Posterior vena cava (tissue), 2 donors: ENCODE measurements at regions of chrX and their contacts with region 1.

Region 1: DNA sequence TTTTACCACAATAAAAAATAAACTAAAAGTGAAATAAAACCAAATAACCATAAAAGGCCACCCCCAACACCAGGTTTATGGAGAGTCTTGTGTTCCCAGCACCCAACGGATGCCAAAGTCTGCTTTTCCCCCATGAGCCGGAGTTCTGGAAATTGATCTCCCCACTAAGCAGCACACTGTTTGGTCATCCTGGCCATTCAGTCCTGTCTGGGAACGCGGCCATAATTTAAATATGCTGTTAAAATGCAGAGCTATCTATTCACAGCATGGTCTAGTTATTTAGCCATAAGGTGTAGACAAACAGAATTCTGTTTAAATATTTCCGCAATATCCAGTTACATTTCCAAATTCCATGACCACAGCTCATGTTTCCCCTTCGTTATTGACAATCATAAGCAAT is 129.6 kb upstream of the TBL1X start:
- DNase-seq: no peak

Region 2: DNA sequence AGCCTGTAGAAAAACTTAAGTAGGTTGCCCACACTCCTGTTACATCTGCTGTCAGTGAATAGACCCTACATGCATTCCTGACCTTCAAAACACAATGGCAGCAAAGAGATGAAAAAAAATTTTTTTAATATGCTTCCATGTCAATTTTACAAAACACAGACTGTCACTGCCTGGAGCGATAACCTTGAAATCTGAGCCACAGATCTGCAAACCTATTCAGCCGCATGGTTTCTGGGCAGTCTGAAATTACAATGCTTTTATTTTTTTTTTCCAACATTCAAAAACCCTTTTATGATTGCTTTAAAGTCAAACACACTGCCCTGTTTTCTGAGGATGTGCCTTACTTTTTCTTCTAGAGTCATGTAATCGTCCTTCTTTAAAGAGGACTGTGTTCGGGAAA is 1922.4 kb before region 1 on chrX:
- intact Hi-C with region 1: no loop called
- DNase-seq: no peak

Region 3: DNA sequence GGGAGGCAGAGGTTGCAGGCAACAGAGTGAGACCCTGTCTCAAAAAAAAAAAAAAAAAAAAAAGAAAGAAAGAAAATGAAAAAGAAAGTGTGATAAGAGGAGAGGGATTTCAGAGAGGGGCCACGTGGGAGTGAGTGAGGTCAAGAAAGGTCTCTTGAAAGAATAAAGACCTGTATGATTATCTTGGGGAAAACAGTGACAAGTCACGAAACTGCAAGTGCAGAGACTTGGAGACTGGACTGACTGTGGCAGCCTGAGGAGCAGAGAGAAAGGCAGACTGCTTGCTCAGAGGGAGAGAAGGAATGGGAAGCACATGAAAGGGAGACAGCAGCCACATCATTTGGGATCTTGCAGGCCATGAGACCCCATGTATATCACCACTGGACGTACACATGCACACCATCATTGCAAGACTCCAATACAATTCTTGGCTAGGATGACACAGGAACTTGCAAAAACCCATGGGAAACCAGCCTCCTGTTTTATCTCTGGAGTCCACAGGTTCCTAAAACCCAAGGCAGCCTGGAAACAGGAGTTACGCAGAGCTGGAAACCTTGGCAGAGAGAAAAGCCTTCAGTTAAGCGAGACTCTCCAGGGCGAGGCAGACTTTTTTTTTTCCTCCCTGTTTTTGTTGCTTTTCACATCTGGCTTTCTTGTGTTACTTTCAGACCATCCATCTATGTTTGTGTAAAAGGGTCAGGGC is 77.4 kb before region 1 on chrX:
- intact Hi-C with region 1: loop called in 1 of 2 experiments (anchors 2 kb)
- DNase-seq: no peak

Region 4: DNA sequence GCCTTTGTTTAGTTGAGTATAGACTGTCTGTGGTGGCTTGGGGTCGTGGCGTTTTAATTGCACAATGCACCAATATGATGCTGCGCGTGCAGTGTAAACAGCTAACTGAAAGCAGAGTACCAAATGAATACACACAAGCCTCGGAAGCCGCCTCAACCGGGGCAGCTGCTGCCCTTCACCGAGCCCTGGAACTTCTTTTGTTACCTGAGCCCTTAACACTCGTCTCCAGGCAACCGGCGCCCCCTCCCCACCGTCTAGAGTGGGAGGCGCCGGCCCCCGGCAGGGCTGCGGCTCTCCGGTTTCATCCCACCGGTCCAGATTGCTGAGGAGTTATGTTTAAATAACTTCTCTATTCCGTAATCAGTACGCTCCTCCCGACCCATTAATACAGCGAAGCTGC is 43.6 kb before region 1 on chrX:
- intact Hi-C with region 1: no loop called
- DNase-seq: no peak

Region 5: GRCh38 chrX:9510366-9510765 is 175.1 kb after region 1 on chrX:
- intact Hi-C with region 1: no loop called
- DNase-seq: no peak